ENCODE measurements at regions of chr7 and their contacts with region 1.

Region 1: GRCh38 chr7:150448789-150449147 is 1.7 kb upstream of the GIMAP8 start:
- DNase-seq: peak; percentile 93
- ATAC-seq: peak; percentile 60

Region 2: GRCh38 chr7:150514748-150515222 is 66.0 kb after region 1 on chr7 and contains the start of gene GIMAP7:
- intact Hi-C with region 1: loop called (anchors 2 kb)
- DNase-seq: no peak
- ATAC-seq: peak; percentile 71
- total RNA-seq, gene GIMAP7: 21.4 TPM

Region 3: GRCh38 chr7:150567169-150567568 is 118.4 kb after region 1 on chr7 and contains the start of gene GIMAP4:
- intact Hi-C with region 1: loop called (anchors 5 kb)
- DNase-seq: no peak
- ATAC-seq: peak; percentile 71
- total RNA-seq, gene GIMAP4: 38.4 TPM

Region 4: GRCh38 chr7:150753826-150754603 is 305.2 kb after region 1 on chr7:
- intact Hi-C with region 1: loop called (anchors 1 kb)
- DNase-seq: no peak
- ATAC-seq: no peak